Activated CD4-positive, alpha-beta memory T cell treated with anti-CD3 and anti-CD28 coated beads for 36 hours (primary cell): ENCODE measurements at regions of chr20 and their contacts with region 1.

Region 1: GRCh38 chr20:49594143-49594930 is 26.4 kb upstream of the PTGIS start:
- DNase-seq: peak; percentile 92
- H3K4me3 Mint-ChIP-seq: peak overlapping the region; percentile 95
- H3K27ac Mint-ChIP-seq: peak overlapping the region; percentile 100
- H3K4me1 Mint-ChIP-seq: peaks cover 81% of the 10 kb centered on the region
- H3K27me3 Mint-ChIP-seq: no peaks in the 10 kb centered on the region

Region 2: DNA sequence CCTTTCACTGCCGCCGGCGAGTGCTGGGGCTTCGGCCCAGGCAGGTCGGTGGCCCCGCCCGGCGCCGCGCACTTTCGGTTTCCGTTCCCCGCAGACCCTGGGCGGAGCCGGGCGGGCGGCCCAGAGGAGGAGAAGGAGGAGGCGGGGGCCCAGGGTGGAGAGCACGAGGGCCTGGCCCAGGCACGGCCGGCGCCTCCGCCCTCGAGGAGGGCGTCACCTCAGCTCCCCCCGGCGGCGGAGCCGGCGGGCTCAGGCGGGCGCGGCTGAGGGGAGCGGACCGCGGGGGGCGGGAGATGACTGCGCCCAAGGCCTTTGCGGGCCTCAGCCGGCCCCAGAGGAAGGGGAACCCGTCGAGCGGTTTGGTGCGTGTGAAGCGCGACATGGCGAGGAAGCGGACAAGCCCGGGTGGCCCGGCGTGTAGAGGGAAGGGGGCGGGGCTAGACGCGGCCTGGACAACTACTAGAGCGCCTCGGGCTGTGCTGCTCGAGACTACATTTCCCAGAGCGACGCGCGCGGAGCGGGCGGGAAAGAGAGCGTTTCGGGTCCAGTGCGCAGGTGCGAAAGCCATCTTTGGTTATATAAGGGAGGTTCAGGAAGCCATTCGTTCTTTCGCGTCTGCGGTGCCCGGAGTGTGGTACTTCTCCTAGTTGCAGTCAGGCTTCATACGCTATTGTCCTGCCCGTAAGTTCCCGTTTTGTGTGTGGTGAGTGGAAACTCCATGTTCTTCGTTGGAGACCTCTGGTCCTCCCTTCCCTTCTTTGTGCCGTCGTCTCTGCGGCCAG is 316.1 kb before region 1 on chr20 and contains the start of gene ZNFX1:
- CTCF ChIA-PET with region 1: no interaction called
- POLR2A ChIA-PET with region 1: interaction called, 26 read pairs
- intact Hi-C with region 1: loop called (anchors 1 kb)
- DNase-seq: peak; percentile 99
- H3K4me3 Mint-ChIP-seq: peak within 1 kb of the TSS; percentile 99
- H3K27ac Mint-ChIP-seq: peak within 1 kb of the TSS; percentile 99
- H3K4me1 Mint-ChIP-seq: peaks cover 51% of the 10 kb centered on the region
- H3K27me3 Mint-ChIP-seq: peaks cover 2% of the 10 kb centered on the region
- total RNA-seq, gene ZNFX1: 42.5 to 45.3 TPM

Region 3: DNA sequence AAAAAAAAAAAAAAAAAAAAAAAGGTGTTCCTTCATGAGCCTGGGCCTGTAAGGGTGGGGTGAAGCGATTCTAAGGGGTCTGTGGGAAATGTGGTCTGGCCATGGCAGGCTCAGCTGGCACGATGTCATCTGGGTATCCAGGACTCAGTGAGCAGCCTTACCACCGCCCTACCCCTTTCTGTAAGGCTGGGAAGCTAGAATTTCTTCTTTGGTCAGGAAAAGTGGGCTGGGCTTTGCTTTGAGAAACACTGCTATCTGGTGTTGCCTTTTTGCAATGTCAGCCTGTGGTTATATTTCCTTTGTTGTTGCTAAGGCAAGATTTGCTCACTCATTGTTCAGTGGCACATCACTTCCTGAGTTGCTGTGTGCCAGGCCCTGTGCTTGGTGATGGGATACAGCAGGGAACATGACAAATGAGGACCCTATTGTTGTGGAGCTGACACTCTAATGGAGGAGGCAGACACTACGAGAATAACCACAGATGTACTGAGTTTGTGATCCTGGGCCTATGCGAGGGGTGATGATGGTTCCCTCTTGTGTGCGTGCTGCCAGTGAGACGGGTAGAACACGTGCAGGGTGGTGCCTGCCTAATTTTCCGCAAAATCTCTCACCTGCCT is 270.6 kb before region 1 on chr20:
- CTCF ChIA-PET with region 1: no interaction called
- POLR2A ChIA-PET with region 1: no interaction called
- intact Hi-C with region 1: loop called (anchors 5 kb)
- DNase-seq: peak; percentile 48
- H3K4me3 Mint-ChIP-seq: peak overlapping the region; percentile 24
- H3K27ac Mint-ChIP-seq: peak overlapping the region; percentile 69
- H3K4me1 Mint-ChIP-seq: peaks cover 26% of the 10 kb centered on the region
- H3K27me3 Mint-ChIP-seq: peaks cover 26% of the 10 kb centered on the region

Region 4: DNA sequence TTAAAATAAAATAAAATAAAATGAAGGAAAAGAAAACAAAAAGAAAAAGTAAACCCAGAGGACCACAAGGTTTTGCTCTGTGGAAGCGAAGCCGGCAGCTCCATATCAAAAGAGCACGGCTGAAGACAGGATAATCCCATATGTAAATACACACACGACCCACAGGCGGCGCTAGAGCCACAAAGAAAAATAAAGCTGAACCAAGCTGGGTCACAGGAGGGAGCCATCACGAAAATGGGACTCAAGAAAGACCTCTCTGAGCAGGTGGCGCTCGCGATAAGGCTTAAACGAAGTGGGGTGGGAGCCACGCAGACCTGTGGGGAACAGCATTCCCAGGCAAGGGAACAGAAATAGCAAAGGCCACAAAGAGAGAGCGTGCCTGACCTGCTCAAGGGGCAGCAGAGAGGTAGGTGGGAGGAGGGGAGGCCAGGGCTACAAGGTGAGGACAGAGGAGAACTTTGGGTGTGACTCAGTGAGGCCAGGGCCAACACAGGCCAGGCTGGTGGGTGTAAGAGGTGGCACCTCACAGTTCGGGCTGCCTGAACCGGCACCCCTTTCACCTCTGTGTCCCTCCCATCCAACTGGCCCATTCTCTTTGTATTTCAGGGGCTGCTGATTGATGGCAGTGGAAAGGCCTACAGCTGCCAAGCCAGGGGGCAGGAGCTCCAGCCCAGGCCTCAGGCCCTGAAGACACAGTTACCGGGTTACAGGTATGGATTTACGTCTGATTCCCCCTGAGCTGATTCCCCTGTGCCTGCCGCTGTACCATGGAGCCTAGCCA is 52.4 kb before region 1 on chr20:
- CTCF ChIA-PET with region 1: interaction called, 764 read pairs
- POLR2A ChIA-PET with region 1: interaction called, 42 read pairs
- intact Hi-C with region 1: no loop called
- DNase-seq: peak; percentile 87
- H3K4me3 Mint-ChIP-seq: no peak overlapping the region
- H3K27ac Mint-ChIP-seq: peak overlapping the region; percentile 38
- H3K4me1 Mint-ChIP-seq: peaks cover 17% of the 10 kb centered on the region
- H3K27me3 Mint-ChIP-seq: peaks cover 11% of the 10 kb centered on the region

Region 5: DNA sequence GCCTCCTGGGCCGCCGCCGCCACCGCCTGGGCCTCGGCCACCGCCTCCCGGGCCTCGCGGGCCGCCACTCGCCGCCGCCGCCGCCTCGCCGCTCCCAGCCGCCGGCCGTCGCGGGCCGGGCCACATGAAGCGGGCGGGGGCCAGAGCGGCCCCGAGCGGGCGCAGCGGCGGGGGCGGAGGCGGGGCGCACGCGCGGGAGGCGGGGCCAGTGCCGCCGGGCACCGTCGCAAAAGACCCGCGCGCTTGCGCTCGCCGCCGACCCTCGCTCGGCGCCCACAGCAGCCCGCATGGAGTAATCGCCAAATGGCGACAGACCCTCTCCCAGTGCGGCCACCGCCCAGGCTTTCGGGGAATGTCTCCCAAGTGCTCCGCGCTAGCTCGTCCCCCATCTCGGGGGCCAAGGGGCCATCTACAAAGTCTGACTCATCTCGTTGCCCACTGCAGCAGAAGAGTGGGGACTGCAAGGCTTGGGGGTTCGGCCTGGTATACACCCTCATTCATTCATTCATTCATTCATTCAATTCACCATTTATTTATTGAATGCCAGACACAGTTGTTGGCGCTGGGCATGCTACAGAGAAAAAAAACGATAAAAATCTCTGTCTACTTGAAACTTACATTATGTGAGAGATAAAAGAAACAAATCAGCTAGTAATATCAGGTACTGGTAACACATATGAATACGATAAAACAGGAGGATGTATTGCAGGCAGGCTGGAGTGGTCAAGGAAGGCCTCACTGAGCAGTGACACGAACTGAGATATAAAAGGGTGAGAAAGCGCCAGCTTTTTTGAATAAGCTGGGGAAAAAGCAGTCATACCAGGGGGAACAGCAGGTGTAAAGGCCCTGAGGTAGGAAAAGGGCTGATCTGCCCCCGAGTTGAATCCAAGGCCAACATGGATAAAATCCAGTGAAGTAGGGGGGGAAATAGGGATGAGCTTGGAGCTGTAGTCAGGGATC is 119.7 kb after region 1 on chr20 and contains the start of gene B4GALT5:
- CTCF ChIA-PET with region 1: no interaction called
- POLR2A ChIA-PET with region 1: no interaction called
- intact Hi-C with region 1: no loop called
- DNase-seq: peak; percentile 69
- H3K4me3 Mint-ChIP-seq: peak within 1 kb of the TSS; percentile 86
- H3K27ac Mint-ChIP-seq: peak within 1 kb of the TSS; percentile 83
- H3K4me1 Mint-ChIP-seq: peaks cover 45% of the 10 kb centered on the region
- H3K27me3 Mint-ChIP-seq: no peaks in the 10 kb centered on the region
- total RNA-seq, gene B4GALT5: 20.9 to 21.4 TPM

Region 6: DNA sequence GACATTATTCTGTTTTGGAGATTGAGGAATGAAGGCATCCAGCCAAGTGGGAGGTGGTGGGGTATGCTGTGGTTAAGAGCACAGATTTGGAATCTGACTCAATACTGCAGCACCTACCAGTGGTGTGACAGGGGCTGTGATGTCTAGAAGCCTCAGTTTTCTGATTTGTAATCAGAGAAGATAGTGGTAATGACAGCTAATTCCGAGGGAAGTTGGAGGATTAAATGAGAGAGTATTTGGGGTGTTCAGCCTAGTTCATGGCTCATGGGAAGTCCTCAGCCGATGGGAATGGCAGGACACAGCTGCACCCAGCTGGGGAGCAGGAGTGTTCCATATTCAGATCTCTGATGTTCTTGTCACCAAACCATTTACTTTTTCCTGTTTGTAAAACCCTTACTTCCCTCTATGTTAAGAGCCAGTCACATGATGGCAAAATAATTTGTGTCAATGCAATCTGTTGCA is 227.6 kb after region 1 on chr20:
- CTCF ChIA-PET with region 1: no interaction called
- POLR2A ChIA-PET with region 1: interaction called, 3 read pairs
- intact Hi-C with region 1: loop called (anchors 2 kb)
- DNase-seq: no peak
- H3K4me3 Mint-ChIP-seq: no peak overlapping the region
- H3K27ac Mint-ChIP-seq: no peak overlapping the region
- H3K4me1 Mint-ChIP-seq: peaks cover 47% of the 10 kb centered on the region
- H3K27me3 Mint-ChIP-seq: no peaks in the 10 kb centered on the region